T-cell (primary cell): ENCODE measurements at regions of chr5 and their contacts with region 1.

Region 1: DNA sequence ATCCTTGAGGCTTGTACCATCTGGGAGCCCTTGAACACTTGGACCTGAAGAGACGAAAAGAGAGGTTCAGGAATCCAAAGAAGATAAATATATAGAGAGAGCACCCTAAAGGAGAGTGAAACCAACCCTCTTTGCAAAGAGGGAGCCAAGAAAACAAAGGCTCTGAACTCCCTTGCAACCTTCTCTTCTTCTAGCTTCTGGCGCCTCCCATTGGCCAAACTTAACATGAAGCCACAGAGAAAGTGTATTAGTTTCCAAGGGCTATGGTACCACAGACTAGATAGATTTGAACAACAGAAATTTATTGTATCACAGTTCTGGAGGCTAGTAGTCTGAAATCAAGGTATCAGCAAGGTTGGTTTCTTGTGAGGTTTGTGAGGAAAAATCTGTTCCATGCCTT is 175.1 kb downstream of the HCN1 start:
- DNase-seq: no peak
- ATAC-seq: no peak
- H3K4me3 ChIP-seq: no peak overlapping the region
- H3K4me3 Mint-ChIP-seq: no peak overlapping the region
- H3K27ac ChIP-seq: no peak overlapping the region
- H3K27ac Mint-ChIP-seq: no peak overlapping the region
- H3K4me1 ChIP-seq: no peaks in the 10 kb centered on the region
- H3K4me1 Mint-ChIP-seq: no peaks in the 10 kb centered on the region
- H3K27me3 ChIP-seq: no peaks in the 10 kb centered on the region
- H3K27me3 Mint-ChIP-seq: no peaks in the 10 kb centered on the region

Region 2: DNA sequence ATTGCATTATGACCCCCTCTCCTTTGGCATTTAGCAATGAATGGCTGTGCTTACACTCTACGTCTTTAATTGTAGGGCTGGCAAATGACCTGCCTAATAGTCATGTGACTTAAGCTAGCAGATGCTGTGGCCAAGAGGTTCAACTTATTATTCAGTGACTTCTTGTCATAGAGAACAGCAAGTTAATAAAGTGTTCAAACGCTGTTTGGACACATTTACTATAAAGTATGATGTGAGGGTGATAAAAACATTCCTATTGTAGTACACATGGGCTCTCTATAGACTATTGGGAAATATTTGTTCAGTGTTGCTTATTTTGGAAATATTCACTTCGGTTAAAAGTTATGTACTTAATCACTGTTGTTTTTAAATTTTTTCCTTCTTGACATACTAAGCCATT is 1573.2 kb before region 1 on chr5:
- CTCF ChIA-PET with region 1: no interaction called
- POLR2A ChIA-PET with region 1: interaction called in 1 of 2 experiments, 12 read pairs
- DNase-seq: no peak
- ATAC-seq: no peak
- H3K4me3 ChIP-seq: no peak overlapping the region
- H3K4me3 Mint-ChIP-seq: no peak overlapping the region
- H3K27ac ChIP-seq: no peak overlapping the region
- H3K27ac Mint-ChIP-seq: no peak overlapping the region
- H3K4me1 ChIP-seq: no peaks in the 10 kb centered on the region
- H3K4me1 Mint-ChIP-seq: no peaks in the 10 kb centered on the region
- H3K27me3 ChIP-seq: no peaks in the 10 kb centered on the region
- H3K27me3 Mint-ChIP-seq: no peaks in the 10 kb centered on the region